CD14-positive monocyte (primary cell): ENCODE measurements at regions of chr20 and their contacts with region 1.

Region 1: DNA sequence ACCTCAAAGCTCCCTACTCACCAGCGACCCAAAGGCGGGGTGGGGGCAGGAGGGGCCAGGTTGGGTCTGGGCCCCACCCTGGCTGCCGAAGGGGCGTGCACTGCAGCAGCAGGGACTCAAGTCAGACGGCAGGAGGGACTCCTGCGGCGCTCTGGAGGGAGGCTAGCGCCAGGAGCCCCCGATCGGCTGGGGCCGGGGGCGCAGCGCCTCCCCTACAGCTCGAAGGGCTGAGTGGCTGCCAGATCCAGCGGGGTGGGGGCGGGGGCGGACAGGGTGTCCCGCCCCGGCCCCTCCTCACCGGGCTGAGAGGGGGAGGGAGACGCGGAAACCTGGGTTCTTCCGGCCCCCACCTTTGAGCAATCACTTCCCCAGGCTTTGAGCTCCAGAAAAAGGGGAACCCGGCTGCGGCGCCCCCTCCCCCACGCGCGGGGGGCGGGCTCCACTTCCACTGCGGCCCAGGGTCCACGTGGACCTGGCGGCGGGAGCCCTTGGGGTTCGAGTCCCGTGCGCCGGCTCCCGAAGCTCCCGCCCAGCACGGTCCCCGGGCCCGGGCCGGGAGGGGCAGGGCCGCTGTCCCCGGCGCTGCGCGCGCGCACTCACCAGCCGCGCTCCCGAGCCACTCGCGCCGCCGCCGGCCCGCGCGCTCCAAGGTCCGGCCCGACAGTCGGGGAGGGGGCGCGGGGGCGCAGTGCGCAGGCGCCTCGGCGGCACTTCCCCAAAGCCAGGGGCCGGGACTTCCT is at the start of gene RGS19:
- DNase-seq: peak; percentile 89 to 94 (median 91)
- H3K4me3 ChIP-seq: peak within 1 kb of the TSS; percentile 84 to 100 (median 88)
- H3K4me3 Mint-ChIP-seq: peak within 1 kb of the TSS; percentile 95 to 97
- H3K27ac ChIP-seq: peak within 1 kb of the TSS; percentile 81 to 87
- H3K27ac Mint-ChIP-seq: peak within 1 kb of the TSS; percentile 89 to 95 (median 93)
- H3K4me1 ChIP-seq: peaks cover 54 to 77% of the 10 kb centered on the region in 2 donors
- H3K4me1 Mint-ChIP-seq: peaks cover 54% of the 10 kb centered on the region
- H3K27me3 ChIP-seq: peaks cover under 1 to 4% of the 10 kb centered on the region in 2 donors
- H3K27me3 Mint-ChIP-seq: peaks cover 7 to 10% (median 8%) of the 10 kb centered on the region in 3 donors
- CTCF ChIP-seq: no peak
- polyA plus RNA-seq, gene RGS19: 235 to 280 (median 244) TPM

Region 2: GRCh38 chr20:64119681-64120341 is 40.4 kb after region 1 on chr20:
- intact Hi-C with region 1: loop called in 1 of 2 experiments (anchors 5 kb)
- DNase-seq: no peak
- H3K4me3 ChIP-seq: peak overlapping the region; percentile 8 to 71 (median 13)
- H3K4me3 Mint-ChIP-seq: peak overlapping the region; percentile 75 to 83
- H3K27ac ChIP-seq: no peak overlapping the region
- H3K27ac Mint-ChIP-seq: no peak overlapping the region
- H3K4me1 ChIP-seq: peaks cover 8% of the 10 kb centered on the region in 2 donors
- H3K4me1 Mint-ChIP-seq: peaks cover 8% of the 10 kb centered on the region
- H3K27me3 ChIP-seq: no peaks in the 10 kb centered on the region
- H3K27me3 Mint-ChIP-seq: peaks cover 15 to 27% (median 24%) of the 10 kb centered on the region in 3 donors
- CTCF ChIP-seq: no peak

Region 3: GRCh38 chr20:64254571-64255360 is 175.3 kb after region 1 on chr20:
- intact Hi-C with region 1: loop called in 1 of 2 experiments (anchors 5 kb)
- DNase-seq: no peak
- H3K4me3 ChIP-seq: peak overlapping the region; percentile 39 to 84 (median 68)
- H3K4me3 Mint-ChIP-seq: peak overlapping the region; percentile 66 to 80
- H3K27ac ChIP-seq: peak overlapping the region in 1 of 2 donors; percentile 68
- H3K27ac Mint-ChIP-seq: no peak overlapping the region
- H3K4me1 ChIP-seq: peaks cover 18 to 29% of the 10 kb centered on the region in 2 donors
- H3K4me1 Mint-ChIP-seq: peaks cover 33% of the 10 kb centered on the region
- H3K27me3 ChIP-seq: peaks cover 0 to 6% of the 10 kb centered on the region in 2 donors
- H3K27me3 Mint-ChIP-seq: peaks cover 4 to 11% (median 9%) of the 10 kb centered on the region in 3 donors
- CTCF ChIP-seq: no peak